H1 (cell line): ENCODE measurements at regions of chr10 and their contacts with region 1.

Region 1: GRCh38 chr10:80144067-80144695 is 11.7 kb downstream of the PLAC9 start:
- DNase-seq: no peak
- H3K4me3 ChIP-seq: no peak overlapping the region
- H3K27ac ChIP-seq: no peak overlapping the region
- H3K4me1 ChIP-seq: peaks cover 0 to 3% (median 0%) of the 10 kb centered on the region in 4 experiments; a peak in 1 of 7 replicates
- H3K27me3 ChIP-seq: no peaks in the 10 kb centered on the region
- CTCF ChIP-seq: no peak
- EP300 ChIP-seq: no peak
- POLR2A ChIP-seq: no peak
- RAD21 ChIP-seq: no peak

Region 2: GRCh38 chr10:80055760-80056159 is 88.4 kb before region 1 on chr10:
- CTCF ChIA-PET with region 1: interaction called, 29 read pairs
- POLR2A ChIA-PET with region 1: no interaction called
- DNase-seq: no peak
- H3K4me3 ChIP-seq: no peak overlapping the region
- H3K27ac ChIP-seq: no peak overlapping the region
- H3K4me1 ChIP-seq: no peaks in the 10 kb centered on the region
- H3K27me3 ChIP-seq: no peaks in the 10 kb centered on the region
- CTCF ChIP-seq: no peak
- EP300 ChIP-seq: no peak
- POLR2A ChIP-seq: no peak
- RAD21 ChIP-seq: no peak

Region 3: DNA sequence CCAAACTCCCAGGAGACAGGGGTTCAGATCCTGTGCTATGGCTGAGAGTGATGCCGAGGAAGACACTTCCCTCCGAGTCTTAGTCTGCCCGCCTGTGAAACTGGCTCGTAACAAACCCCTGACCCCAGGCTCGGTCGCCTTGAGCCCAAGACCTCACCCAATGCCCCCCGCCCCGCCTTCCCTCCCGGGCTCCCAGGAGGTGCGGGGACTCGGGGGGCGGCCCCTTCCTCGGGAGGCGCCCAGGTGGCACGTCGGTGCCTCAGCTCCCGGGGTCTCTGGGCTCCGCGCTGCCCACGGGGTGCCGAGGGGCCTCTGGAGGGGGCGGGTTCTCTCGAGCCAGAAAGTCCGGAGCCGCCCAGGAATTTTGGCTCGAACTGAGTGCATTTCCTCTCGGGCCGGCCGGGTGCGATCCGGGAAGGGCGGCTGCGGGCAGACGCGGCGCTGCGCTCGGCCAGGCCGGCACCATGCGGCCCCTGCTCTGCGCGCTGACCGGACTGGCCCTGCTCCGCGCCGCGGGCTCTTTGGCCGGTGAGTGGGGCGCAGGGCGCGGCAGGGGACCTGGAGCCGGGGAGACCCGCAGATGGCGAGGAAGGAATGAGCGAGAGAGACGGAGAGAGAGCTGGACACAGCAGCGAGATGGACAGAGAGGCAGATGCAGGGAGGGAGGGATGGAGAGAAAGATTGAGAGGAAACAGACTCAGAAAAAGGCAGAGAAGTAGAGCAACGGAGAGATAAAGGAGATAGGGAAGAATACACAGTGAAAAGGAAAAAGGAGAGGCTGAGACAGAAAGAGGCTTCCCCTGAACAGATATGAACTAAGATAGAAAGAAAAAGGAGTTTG is 11.7 kb before region 1 on chr10 and contains the start of gene PLAC9:
- CTCF ChIA-PET with region 1: interaction called, 32 read pairs
- POLR2A ChIA-PET with region 1: interaction called, 4 read pairs
- DNase-seq: peak in 1 of 2 experiments; percentile 70
- H3K4me3 ChIP-seq: peak within 1 kb of the TSS; percentile 42 to 76 (median 50)
- H3K27ac ChIP-seq: no peak within 1 kb of the TSS
- H3K4me1 ChIP-seq: peaks cover 5 to 9% (median 8%) of the 10 kb centered on the region in 4 experiments; a peak in 6 of 7 replicates
- H3K27me3 ChIP-seq: peaks cover 0 to 11% (median 8%) of the 10 kb centered on the region in 4 experiments; a peak in 4 of 7 replicates
- CTCF ChIP-seq: no peak
- EP300 ChIP-seq: no peak
- POLR2A ChIP-seq: no peak; a peak in 1 of 3 replicates
- RAD21 ChIP-seq: no peak
- total RNA-seq, gene PLAC9: 12.4 and 16.7 TPM in 2 replicates

Region 4: GRCh38 chr10:80168679-80169380 is 24.6 kb after region 1 on chr10:
- CTCF ChIA-PET with region 1: interaction called, 50 read pairs
- POLR2A ChIA-PET with region 1: no interaction called
- DNase-seq: peak in 1 of 2 experiments; percentile 77
- H3K4me3 ChIP-seq: no peak overlapping the region
- H3K27ac ChIP-seq: no peak overlapping the region
- H3K4me1 ChIP-seq: peaks cover 4 to 16% (median 9%) of the 10 kb centered on the region in 4 experiments
- H3K27me3 ChIP-seq: no peaks in the 10 kb centered on the region
- CTCF ChIP-seq: peak; percentile 60 to 65 (median 62)
- EP300 ChIP-seq: no peak
- POLR2A ChIP-seq: no peak
- RAD21 ChIP-seq: peak; percentile 63 to 72

Region 5: DNA sequence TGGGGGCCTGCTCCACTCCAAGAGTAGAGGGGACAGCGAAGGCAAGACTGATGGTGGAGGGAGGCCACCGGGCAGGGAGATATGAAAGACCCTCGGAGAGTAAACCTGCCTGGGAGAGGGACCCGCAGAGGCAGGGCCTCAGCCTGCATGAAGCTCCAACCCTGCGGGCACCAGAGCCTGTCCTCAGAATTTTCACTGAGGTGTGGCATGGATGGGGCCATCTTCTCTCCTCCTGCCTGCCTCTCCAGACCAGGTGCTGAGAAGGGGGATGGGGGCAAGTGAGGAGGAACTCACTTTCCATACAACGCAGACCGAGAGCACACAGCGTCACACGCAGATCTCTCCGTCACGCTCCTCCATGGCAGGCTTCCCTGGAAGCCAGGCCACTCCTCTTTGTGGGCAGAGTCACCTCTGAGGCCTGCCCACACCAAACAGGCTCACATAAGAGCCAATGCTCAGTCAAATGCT is 42.3 kb after region 1 on chr10:
- CTCF ChIA-PET with region 1: interaction called, 18 read pairs
- POLR2A ChIA-PET with region 1: no interaction called
- DNase-seq: no peak
- H3K4me3 ChIP-seq: no peak overlapping the region
- H3K27ac ChIP-seq: no peak overlapping the region
- H3K4me1 ChIP-seq: peaks cover 0 to 4% (median 2%) of the 10 kb centered on the region in 4 experiments; a peak in 3 of 7 replicates
- H3K27me3 ChIP-seq: no peaks in the 10 kb centered on the region
- CTCF ChIP-seq: no peak
- EP300 ChIP-seq: no peak
- POLR2A ChIP-seq: no peak
- RAD21 ChIP-seq: no peak

Region 6: GRCh38 chr10:80350251-80350650 is 206.1 kb after region 1 on chr10:
- CTCF ChIA-PET with region 1: no interaction called
- POLR2A ChIA-PET with region 1: no interaction called
- DNase-seq: no peak
- H3K4me3 ChIP-seq: no peak overlapping the region
- H3K27ac ChIP-seq: no peak overlapping the region
- H3K4me1 ChIP-seq: no peaks in the 10 kb centered on the region
- H3K27me3 ChIP-seq: no peaks in the 10 kb centered on the region
- CTCF ChIP-seq: no peak
- EP300 ChIP-seq: no peak
- POLR2A ChIP-seq: no peak
- RAD21 ChIP-seq: no peak